ENCODE measurements at regions of chrX and their contacts with region 1.

Region 1: GRCh38 chrX:53683556-53684414 is 2.7 kb downstream of the HUWE1 start:
- DNase-seq: peak; percentile 80 to 96 (median 92)
- H3K4me3 ChIP-seq: peak overlapping the region; percentile 82
- H3K4me3 Mint-ChIP-seq: peak overlapping the region; percentile 87 to 98 (median 92)
- H3K27ac ChIP-seq: peak overlapping the region; percentile 89
- H3K27ac Mint-ChIP-seq: peak overlapping the region; percentile 91 to 99 (median 98)
- H3K4me1 ChIP-seq: peaks cover 34% of the 10 kb centered on the region
- H3K4me1 Mint-ChIP-seq: peaks cover 45 to 58% (median 54%) of the 10 kb centered on the region in 3 donors
- H3K27me3 ChIP-seq: no peaks in the 10 kb centered on the region
- H3K27me3 Mint-ChIP-seq: peaks cover 0 to 3% of the 10 kb centered on the region in 2 donors

Region 2: GRCh38 chrX:53422086-53422860 is 261.5 kb before region 1 on chrX and contains the start of gene SMC1A:
- CTCF ChIA-PET with region 1: no interaction called
- POLR2A ChIA-PET with region 1: interaction called, 10 read pairs
- DNase-seq: peak; percentile 89 to 99 (median 98)
- H3K4me3 ChIP-seq: peak within 1 kb of the TSS; percentile 82
- H3K4me3 Mint-ChIP-seq: peak within 1 kb of the TSS; percentile 90 to 99 (median 94)
- H3K27ac ChIP-seq: peak within 1 kb of the TSS; percentile 98
- H3K27ac Mint-ChIP-seq: peak within 1 kb of the TSS; percentile 88 to 100 (median 99)
- H3K4me1 ChIP-seq: peaks cover 20% of the 10 kb centered on the region
- H3K4me1 Mint-ChIP-seq: peaks cover 32 to 40% (median 36%) of the 10 kb centered on the region in 3 donors
- H3K27me3 ChIP-seq: no peaks in the 10 kb centered on the region
- H3K27me3 Mint-ChIP-seq: peaks cover 0 to 1% of the 10 kb centered on the region in 2 donors
- total RNA-seq, gene SMC1A: 143 to 158 TPM

Region 3: GRCh38 chrX:53714580-53715345 is 31.0 kb after region 1 on chrX:
- CTCF ChIA-PET with region 1: interaction called, 10 read pairs
- POLR2A ChIA-PET with region 1: interaction called, 14 read pairs
- DNase-seq: peak; percentile 30 to 77 (median 56)
- H3K4me3 ChIP-seq: peak overlapping the region; percentile 29
- H3K4me3 Mint-ChIP-seq: peak overlapping the region; percentile 79 to 92 (median 84)
- H3K27ac ChIP-seq: peak overlapping the region; percentile 75
- H3K27ac Mint-ChIP-seq: peak overlapping the region; percentile 94 to 99 (median 96)
- H3K4me1 ChIP-seq: peaks cover 46% of the 10 kb centered on the region
- H3K4me1 Mint-ChIP-seq: peaks cover 47 to 51% (median 50%) of the 10 kb centered on the region in 3 donors
- H3K27me3 ChIP-seq: no peaks in the 10 kb centered on the region
- H3K27me3 Mint-ChIP-seq: peaks cover 0 to 3% of the 10 kb centered on the region in 2 donors

Region 4: GRCh38 chrX:53732797-53733196 is 49.0 kb after region 1 on chrX:
- CTCF ChIA-PET with region 1: no interaction called
- POLR2A ChIA-PET with region 1: no interaction called
- DNase-seq: no peak
- H3K4me3 ChIP-seq: no peak overlapping the region
- H3K4me3 Mint-ChIP-seq: peak overlapping the region in 1 of 7 donors; percentile 18
- H3K27ac ChIP-seq: no peak overlapping the region
- H3K27ac Mint-ChIP-seq: no peak overlapping the region
- H3K4me1 ChIP-seq: no peaks in the 10 kb centered on the region
- H3K4me1 Mint-ChIP-seq: peaks cover 13 to 16% (median 15%) of the 10 kb centered on the region in 3 donors
- H3K27me3 ChIP-seq: no peaks in the 10 kb centered on the region
- H3K27me3 Mint-ChIP-seq: peaks cover 0 to 13% of the 10 kb centered on the region in 2 donors

Region 5: GRCh38 chrX:54044126-54044876 is 360.5 kb after region 1 on chrX and contains the start of gene PHF8:
- CTCF ChIA-PET with region 1: no interaction called
- POLR2A ChIA-PET with region 1: interaction called, 19 read pairs
- DNase-seq: peak; percentile 91 to 97 (median 94)
- H3K4me3 ChIP-seq: peak within 1 kb of the TSS; percentile 85
- H3K4me3 Mint-ChIP-seq: peak within 1 kb of the TSS; percentile 89 to 97 (median 94)
- H3K27ac ChIP-seq: peak within 1 kb of the TSS; percentile 81
- H3K27ac Mint-ChIP-seq: peak within 1 kb of the TSS; percentile 96 to 100 (median 98)
- H3K4me1 ChIP-seq: peaks cover 13% of the 10 kb centered on the region
- H3K4me1 Mint-ChIP-seq: peaks cover 24 to 28% (median 27%) of the 10 kb centered on the region in 3 donors
- H3K27me3 ChIP-seq: no peaks in the 10 kb centered on the region
- H3K27me3 Mint-ChIP-seq: peaks cover 0 to 2% of the 10 kb centered on the region in 2 donors
- total RNA-seq, gene PHF8: 42.7 to 45.5 TPM